ENCODE measurements at regions of chr1 and their contacts with region 1.

Region 1: DNA sequence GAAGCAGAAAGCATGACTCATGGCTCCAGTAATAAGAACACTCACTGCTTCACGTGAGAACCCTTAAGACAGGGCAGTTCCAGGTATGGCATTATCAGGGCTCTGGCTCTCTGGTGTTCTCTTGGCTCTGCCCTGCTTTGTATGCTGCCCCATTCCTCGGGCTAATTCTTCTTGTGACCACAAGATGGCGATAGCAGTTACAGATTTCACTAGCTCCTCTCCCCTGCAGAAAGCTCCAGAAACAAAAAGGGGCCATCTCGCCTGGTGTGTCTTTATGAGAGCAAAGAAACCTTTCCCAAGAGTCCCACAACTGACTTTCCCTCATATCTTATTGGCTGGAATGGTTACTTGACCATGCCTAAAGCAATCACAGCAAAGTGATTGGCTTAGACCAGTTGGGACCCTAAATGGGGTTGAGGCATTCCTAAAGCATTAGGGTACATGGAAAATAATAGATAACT is 60.1 kb downstream of the F3 start:
- DNase-seq: peak; percentile 37 to 66
- ATAC-seq: peak; percentile 89 to 96
- H3K4me3 ChIP-seq: no peak overlapping the region
- H3K27ac ChIP-seq: no peak overlapping the region
- H3K4me1 ChIP-seq: no peaks in the 10 kb centered on the region
- CTCF ChIP-seq: peak; percentile 67
- EP300 ChIP-seq: no peak
- POLR2A ChIP-seq: no peak
- RAD21 ChIP-seq: peak; percentile 56 to 62

Region 2: GRCh38 chr1:94471271-94471670 is 10.2 kb before region 1 on chr1:
- CTCF ChIA-PET with region 1: interaction called, 11 read pairs
- POLR2A ChIA-PET with region 1: no interaction called
- DNase-seq: no peak
- ATAC-seq: no peak
- H3K4me3 ChIP-seq: no peak overlapping the region
- H3K27ac ChIP-seq: no peak overlapping the region
- H3K4me1 ChIP-seq: no peaks in the 10 kb centered on the region
- CTCF ChIP-seq: no peak
- EP300 ChIP-seq: no peak
- POLR2A ChIP-seq: no peak
- RAD21 ChIP-seq: no peak

Region 3: DNA sequence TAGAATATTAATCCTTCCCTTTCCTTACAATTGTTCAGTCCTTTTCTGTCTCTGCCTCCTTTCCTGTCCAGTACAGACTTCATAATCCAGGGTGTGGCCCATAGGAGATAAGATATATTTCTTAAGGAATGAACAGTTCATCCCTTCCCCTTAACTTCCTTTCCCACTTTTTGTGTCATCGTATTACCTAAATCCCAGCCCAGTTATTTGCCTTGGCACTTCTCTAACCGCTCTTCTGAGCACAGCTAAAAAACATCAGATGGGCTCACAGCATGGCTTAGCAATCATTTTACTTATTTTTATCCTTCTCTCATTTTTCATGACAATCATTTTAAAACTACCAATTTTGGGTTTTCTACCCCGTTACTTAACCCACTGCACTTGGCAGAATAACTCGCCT is 20.4 kb after region 1 on chr1:
- CTCF ChIA-PET with region 1: interaction called, 17 read pairs
- POLR2A ChIA-PET with region 1: no interaction called
- DNase-seq: no peak
- ATAC-seq: no peak
- H3K4me3 ChIP-seq: no peak overlapping the region
- H3K27ac ChIP-seq: no peak overlapping the region
- H3K4me1 ChIP-seq: no peaks in the 10 kb centered on the region
- CTCF ChIP-seq: no peak
- EP300 ChIP-seq: no peak
- POLR2A ChIP-seq: no peak
- RAD21 ChIP-seq: no peak